Activated CD8-positive, alpha-beta T cell treated with anti-CD3 and anti-CD28 coated beads, Interleukin-2, amount 10 ng/mL, durations not matched to agents 7 days and 5 days (primary cell): ENCODE measurements at regions of chr12 and their contacts with region 1.

Region 1: GRCh38 chr12:12008931-12009611 is 61.7 kb upstream of the BCL2L14 start:
- DNase-seq: peak; percentile 70
- ATAC-seq: peak; percentile 75
- H3K4me3 Mint-ChIP-seq: peak overlapping the region; percentile 69
- H3K27ac Mint-ChIP-seq: peak overlapping the region; percentile 95
- H3K4me1 Mint-ChIP-seq: peaks cover 64% of the 10 kb centered on the region
- H3K27me3 Mint-ChIP-seq: peaks cover 7% of the 10 kb centered on the region

Region 2: DNA sequence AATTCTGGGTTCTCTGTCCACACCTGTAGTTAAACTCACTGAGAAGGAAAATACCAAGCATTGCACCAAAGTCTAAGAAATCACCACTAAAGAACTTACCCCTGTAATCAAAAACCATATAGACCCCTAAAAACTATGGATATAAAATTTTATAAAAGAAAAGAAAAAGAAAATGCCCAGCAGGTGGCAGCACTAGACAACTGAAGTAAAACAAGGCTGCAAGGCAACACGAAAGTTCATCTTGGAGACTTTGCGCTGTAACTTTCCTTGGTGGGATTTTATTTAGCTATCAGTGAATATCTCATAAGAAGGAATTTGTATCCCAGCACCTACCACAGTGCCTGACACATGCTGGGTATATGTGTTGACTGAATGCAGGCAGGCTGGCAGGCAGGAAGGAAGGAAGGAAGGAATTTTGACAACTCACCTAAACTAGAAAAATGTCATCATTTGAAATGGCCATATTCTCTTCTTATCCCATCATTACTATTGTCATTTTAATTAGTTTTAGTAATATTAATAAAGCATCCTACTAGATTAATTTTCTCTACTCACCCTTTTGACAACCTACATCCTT is 427.8 kb before region 1 on chr12:
- CTCF ChIA-PET with region 1: interaction called, 24 read pairs
- POLR2A ChIA-PET with region 1: no interaction called
- DNase-seq: peak; percentile 81
- ATAC-seq: no peak
- H3K4me3 Mint-ChIP-seq: no peak overlapping the region
- H3K27ac Mint-ChIP-seq: no peak overlapping the region
- H3K4me1 Mint-ChIP-seq: peaks cover 2% of the 10 kb centered on the region
- H3K27me3 Mint-ChIP-seq: peaks cover 27% of the 10 kb centered on the region

Region 3: DNA sequence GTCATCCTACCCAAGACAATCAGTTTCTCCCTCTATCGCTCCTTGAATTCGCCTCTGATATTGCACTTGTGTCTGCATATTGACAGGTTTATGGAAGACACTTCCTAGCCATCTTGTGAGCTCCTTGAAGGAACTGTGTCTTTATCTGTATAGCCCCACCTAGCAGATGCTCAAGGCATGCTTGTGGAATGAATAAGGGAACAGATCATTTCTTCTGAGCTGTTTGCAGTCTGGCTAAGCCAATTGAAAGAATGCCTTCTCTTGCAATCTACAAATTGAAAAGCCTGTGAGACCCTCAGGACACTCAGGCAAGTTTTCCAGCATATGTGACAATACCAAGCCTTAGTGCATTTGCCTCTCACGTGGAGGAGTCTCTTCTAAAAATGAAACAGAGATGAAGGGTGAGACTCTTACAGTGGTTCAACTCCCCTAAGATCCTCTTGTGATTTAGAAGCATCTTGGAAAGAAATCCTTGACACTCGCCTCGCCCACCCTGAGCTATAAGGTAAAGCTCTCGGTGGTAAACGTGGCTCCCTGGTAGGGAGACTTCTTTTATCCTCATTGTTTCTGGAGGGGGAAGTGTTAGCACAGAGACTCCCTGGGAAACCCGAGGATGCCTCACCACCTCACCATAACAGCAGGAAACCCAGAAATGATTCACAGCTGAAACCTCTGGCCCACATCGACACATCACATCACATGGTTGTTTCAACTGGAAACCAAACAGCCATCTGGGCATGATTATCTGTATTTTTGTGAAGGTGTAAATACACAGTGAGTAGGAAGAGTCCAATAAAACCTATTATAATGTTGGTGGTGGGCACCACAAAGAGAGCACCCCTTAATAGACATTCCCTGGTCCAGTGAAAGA is 50.6 kb before region 1 on chr12:
- CTCF ChIA-PET with region 1: interaction called, 23 read pairs
- POLR2A ChIA-PET with region 1: interaction called, 4 read pairs
- DNase-seq: peak; percentile 67
- ATAC-seq: peak; percentile 75
- H3K4me3 Mint-ChIP-seq: no peak overlapping the region
- H3K27ac Mint-ChIP-seq: peak overlapping the region; percentile 23
- H3K4me1 Mint-ChIP-seq: peaks cover 52% of the 10 kb centered on the region
- H3K27me3 Mint-ChIP-seq: peaks cover 8% of the 10 kb centered on the region

Region 4: GRCh38 chr12:11981121-11981733 is 27.8 kb before region 1 on chr12:
- CTCF ChIA-PET with region 1: interaction called, 32 read pairs
- POLR2A ChIA-PET with region 1: interaction called, 15 read pairs
- DNase-seq: peak; percentile 80
- ATAC-seq: peak; percentile 94
- H3K4me3 Mint-ChIP-seq: peak overlapping the region; percentile 52
- H3K27ac Mint-ChIP-seq: peak overlapping the region; percentile 94
- H3K4me1 Mint-ChIP-seq: peaks cover 45% of the 10 kb centered on the region
- H3K27me3 Mint-ChIP-seq: no peaks in the 10 kb centered on the region